CD14-positive monocyte (primary cell): ENCODE measurements at regions of chr11 and their contacts with region 1.

Region 1: GRCh38 chr11:72471005-72471898 is 36.9 kb upstream of the CLPB start:
- DNase-seq: peak; percentile 60 to 71 (median 69)
- H3K4me3 ChIP-seq: no peak overlapping the region
- H3K4me3 Mint-ChIP-seq: peak overlapping the region; percentile 18 to 87
- H3K27ac ChIP-seq: no peak overlapping the region
- H3K27ac Mint-ChIP-seq: peak overlapping the region in 1 of 7 donors; percentile 62
- H3K4me1 ChIP-seq: peaks cover 0 to 4% of the 10 kb centered on the region in 2 donors
- H3K4me1 Mint-ChIP-seq: peaks cover 6% of the 10 kb centered on the region
- H3K27me3 ChIP-seq: peaks cover 8 to 16% of the 10 kb centered on the region in 2 donors
- H3K27me3 Mint-ChIP-seq: peaks cover 22 to 33% (median 29%) of the 10 kb centered on the region in 3 donors
- CTCF ChIP-seq: peak; percentile 86

Region 2: GRCh38 chr11:72579816-72580641 is 108.8 kb after region 1 on chr11:
- intact Hi-C with region 1: loop called in 1 of 2 experiments (anchors 5 kb)
- DNase-seq: no peak
- H3K4me3 ChIP-seq: no peak overlapping the region
- H3K4me3 Mint-ChIP-seq: no peak overlapping the region
- H3K27ac ChIP-seq: no peak overlapping the region
- H3K27ac Mint-ChIP-seq: peak overlapping the region in 1 of 7 donors; percentile 12
- H3K4me1 ChIP-seq: peaks cover 6% of the 10 kb centered on the region in 2 donors
- H3K4me1 Mint-ChIP-seq: peaks cover 16% of the 10 kb centered on the region
- H3K27me3 ChIP-seq: peaks cover 0 to 3% of the 10 kb centered on the region in 2 donors
- H3K27me3 Mint-ChIP-seq: peaks cover 19 to 39% (median 27%) of the 10 kb centered on the region in 3 donors
- CTCF ChIP-seq: no peak

Region 3: GRCh38 chr11:72642884-72643511 is 171.7 kb after region 1 on chr11:
- intact Hi-C with region 1: loop called (anchors 2 to 5 kb)
- DNase-seq: peak; percentile 47 to 66 (median 64)
- H3K4me3 ChIP-seq: peak overlapping the region in 2 of 3 experiments; percentile 14 to 67
- H3K4me3 Mint-ChIP-seq: peak overlapping the region; percentile 60 to 84
- H3K27ac ChIP-seq: no peak overlapping the region
- H3K27ac Mint-ChIP-seq: no peak overlapping the region
- H3K4me1 ChIP-seq: peaks cover 15 to 18% of the 10 kb centered on the region in 2 donors
- H3K4me1 Mint-ChIP-seq: peaks cover 6% of the 10 kb centered on the region
- H3K27me3 ChIP-seq: peaks cover 14 to 59% of the 10 kb centered on the region in 2 donors
- H3K27me3 Mint-ChIP-seq: peaks cover 24 to 35% (median 25%) of the 10 kb centered on the region in 3 donors
- CTCF ChIP-seq: peak; percentile 99

Region 4: DNA sequence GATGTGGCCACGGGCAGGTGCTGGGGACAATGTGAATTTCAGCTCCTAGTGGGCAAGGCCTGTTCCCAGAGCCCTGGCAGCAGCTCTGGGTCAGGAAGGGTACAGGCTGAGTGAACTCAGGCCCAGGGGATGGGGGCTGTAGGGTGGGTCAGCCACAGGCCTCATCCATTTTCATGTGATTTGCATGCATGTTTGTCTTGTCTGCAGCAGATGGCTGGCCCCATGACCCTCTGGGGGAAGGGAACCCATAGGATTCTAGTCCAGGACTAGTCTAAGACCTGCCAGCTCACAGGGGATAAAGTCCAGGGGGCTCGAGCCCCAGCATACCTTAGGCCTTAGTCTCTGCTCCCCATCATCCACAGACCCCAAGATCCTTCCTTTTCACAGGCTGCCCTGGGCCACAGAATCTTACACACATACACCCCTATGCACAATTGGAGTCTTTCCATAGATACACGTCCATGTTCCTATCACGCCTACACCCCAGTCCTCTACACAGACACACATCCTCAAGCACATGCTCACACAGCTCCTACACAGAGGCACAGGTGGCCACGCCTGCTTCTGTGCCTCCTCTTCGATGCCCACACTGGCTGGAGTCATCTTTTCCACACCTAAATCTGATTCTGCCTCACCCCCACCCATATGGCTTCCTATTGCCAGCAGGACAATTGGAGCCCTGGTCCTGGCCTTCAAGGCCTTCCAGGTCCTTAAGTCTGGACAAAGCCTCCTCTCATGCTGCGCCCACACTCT is 177.3 kb after region 1 on chr11:
- intact Hi-C with region 1: loop called (anchors 2 to 5 kb)
- DNase-seq: no peak
- H3K4me3 ChIP-seq: no peak overlapping the region
- H3K4me3 Mint-ChIP-seq: no peak overlapping the region
- H3K27ac ChIP-seq: no peak overlapping the region
- H3K27ac Mint-ChIP-seq: no peak overlapping the region
- H3K4me1 ChIP-seq: no peaks in the 10 kb centered on the region
- H3K4me1 Mint-ChIP-seq: peaks cover 2% of the 10 kb centered on the region
- H3K27me3 ChIP-seq: peaks cover 0 to 10% of the 10 kb centered on the region in 2 donors
- H3K27me3 Mint-ChIP-seq: peaks cover 16 to 36% (median 26%) of the 10 kb centered on the region in 3 donors
- CTCF ChIP-seq: no peak

Region 5: DNA sequence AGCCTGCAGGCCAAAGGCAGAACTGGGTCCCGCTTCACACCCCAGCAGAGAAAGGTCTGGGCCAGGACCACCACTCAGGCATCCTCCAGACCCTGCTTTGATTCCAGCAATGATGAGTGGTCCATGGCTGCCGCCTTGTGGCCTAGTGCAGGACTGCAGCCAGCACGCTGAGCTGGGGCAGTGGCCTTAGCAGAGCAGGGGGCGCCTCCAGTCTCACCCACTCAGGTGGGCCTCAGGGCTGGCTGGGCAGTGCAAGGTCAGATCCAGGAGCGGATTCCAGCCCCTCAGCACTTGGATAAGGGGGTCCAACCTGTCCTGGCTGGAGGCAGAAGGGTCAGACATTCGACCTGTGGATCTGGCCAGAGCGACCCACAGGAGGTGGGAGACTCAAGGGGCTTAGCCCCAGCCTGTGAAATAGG is 212.5 kb after region 1 on chr11:
- intact Hi-C with region 1: loop called (anchors 2 to 5 kb)
- DNase-seq: peak in 2 of 3 donors; percentile 46 to 53
- H3K4me3 ChIP-seq: no peak overlapping the region
- H3K4me3 Mint-ChIP-seq: no peak overlapping the region
- H3K27ac ChIP-seq: no peak overlapping the region
- H3K27ac Mint-ChIP-seq: peak overlapping the region in 1 of 7 donors; percentile 25
- H3K4me1 ChIP-seq: no peaks in the 10 kb centered on the region
- H3K4me1 Mint-ChIP-seq: peaks cover 8% of the 10 kb centered on the region
- H3K27me3 ChIP-seq: peaks cover 0 to 7% of the 10 kb centered on the region in 2 donors
- H3K27me3 Mint-ChIP-seq: peaks cover 19 to 23% (median 21%) of the 10 kb centered on the region in 3 donors
- CTCF ChIP-seq: peak; percentile 91